A549 (cell line): ENCODE measurements at regions of chr9 and their contacts with region 1.

Region 1: GRCh38 chr9:32589083-32589723 is 16.2 kb upstream of the NDUFB6 start:
- DNase-seq: peak; percentile 53 to 63
- ATAC-seq: peak; percentile 89 to 93; a peak in 5 of 6 replicates
- H3K4me3 ChIP-seq: no peak overlapping the region
- H3K27ac ChIP-seq: no peak overlapping the region
- H3K4me1 ChIP-seq: no peaks in the 10 kb centered on the region
- CTCF ChIP-seq: peak; percentile 77
- EP300 ChIP-seq: no peak
- POLR2A ChIP-seq: no peak
- RAD21 ChIP-seq: peak; percentile 77

Region 2: DNA sequence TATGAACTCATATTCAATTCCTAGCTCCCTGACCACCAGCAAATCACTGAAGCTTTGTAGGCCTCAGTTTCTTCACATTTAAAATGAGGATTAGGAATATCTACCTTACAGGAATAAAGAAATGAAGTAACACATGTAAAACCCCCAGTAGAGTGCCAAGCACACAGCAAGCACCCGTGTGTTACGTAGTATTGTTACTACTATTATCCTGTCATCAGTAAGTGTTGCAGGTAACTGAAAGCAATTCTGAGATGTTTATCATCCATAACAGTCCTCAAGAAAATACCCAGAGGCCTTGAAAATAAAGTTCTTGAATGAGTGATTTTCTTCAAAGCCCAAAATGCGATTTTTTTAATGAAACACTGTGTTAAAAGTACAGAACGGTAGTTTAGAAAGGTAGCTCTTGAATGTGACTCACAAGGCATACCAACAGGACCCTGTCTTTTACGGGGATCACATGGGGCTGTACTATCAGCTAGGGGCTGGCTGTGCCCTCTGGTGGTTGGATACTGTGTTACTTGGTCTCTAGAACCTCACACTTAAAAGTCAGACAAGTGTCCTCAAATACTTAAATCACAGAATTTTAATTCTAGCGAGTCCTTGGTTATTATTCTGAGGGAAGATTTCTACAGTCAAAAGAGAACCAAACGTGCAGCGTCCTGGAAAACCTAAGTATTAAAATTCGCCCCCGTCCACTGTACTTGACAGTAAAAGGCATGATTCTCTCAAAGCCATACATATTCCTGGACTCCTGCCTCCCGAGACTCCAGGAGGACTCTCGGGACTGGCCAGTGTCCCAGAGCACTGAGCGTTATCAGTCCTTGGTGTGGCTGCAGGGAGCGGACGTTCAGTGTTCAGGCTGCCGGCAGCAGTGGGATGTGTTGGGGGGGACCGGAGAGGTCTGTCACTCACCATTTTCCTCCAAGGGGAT is 17.0 kb before region 1 on chr9:
- CTCF ChIA-PET with region 1: interaction called, 11 read pairs
- POLR2A ChIA-PET with region 1: no interaction called
- DNase-seq: peak; percentile 79 to 89
- ATAC-seq: peak; percentile 95 to 96
- H3K4me3 ChIP-seq: peak overlapping the region; percentile 90
- H3K27ac ChIP-seq: peak overlapping the region; percentile 79 to 92
- H3K4me1 ChIP-seq: peaks cover 17% of the 10 kb centered on the region
- CTCF ChIP-seq: peak; percentile 67
- EP300 ChIP-seq: no peak
- POLR2A ChIP-seq: no peak
- RAD21 ChIP-seq: peak; percentile 55 to 64

Region 3: GRCh38 chr9:32603914-32604741 is 14.9 kb after region 1 on chr9:
- CTCF ChIA-PET with region 1: interaction called, 52 read pairs
- POLR2A ChIA-PET with region 1: no interaction called
- DNase-seq: peak; percentile 41 to 42
- ATAC-seq: peak; percentile 80 to 81; a peak in 4 of 6 replicates
- H3K4me3 ChIP-seq: no peak overlapping the region
- H3K27ac ChIP-seq: peak overlapping the region in 1 of 2 experiments; percentile 21; a peak in 1 of 6 replicates
- H3K4me1 ChIP-seq: no peaks in the 10 kb centered on the region
- CTCF ChIP-seq: no peak
- EP300 ChIP-seq: no peak
- POLR2A ChIP-seq: no peak
- RAD21 ChIP-seq: no peak

Region 4: DNA sequence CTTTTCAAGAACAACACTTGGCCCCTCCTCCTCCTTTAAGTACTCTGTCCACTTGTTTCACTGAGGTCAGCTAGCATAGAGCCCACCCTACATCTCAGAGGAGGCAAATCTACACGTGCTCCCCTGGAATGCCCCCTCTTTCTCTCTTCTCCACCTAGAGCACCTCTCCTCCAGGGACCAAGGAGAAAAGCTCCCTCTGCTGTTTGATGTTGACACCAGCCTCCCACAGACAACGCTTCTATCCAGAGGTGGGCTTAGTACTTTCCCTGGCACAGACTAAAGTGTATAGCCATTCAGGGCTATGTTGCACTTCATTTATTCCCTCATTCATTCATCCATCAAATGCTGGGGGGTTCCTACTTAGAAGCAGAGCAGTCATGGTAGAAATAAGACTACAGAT is 114.4 kb after region 1 on chr9:
- CTCF ChIA-PET with region 1: interaction called, 30 read pairs
- POLR2A ChIA-PET with region 1: no interaction called
- DNase-seq: peak in 1 of 2 experiments; percentile 12
- ATAC-seq: peak in 1 of 2 experiments; percentile 78; a peak in 3 of 6 replicates
- H3K4me3 ChIP-seq: no peak overlapping the region
- H3K27ac ChIP-seq: 0 out of 6 replicates have a peak overlapping the region, but pooled peaks of 1 of the 2 experiments have one; percentile 14
- H3K4me1 ChIP-seq: 0 out of 3 replicates have a peak, but pooled peaks cover 3% of the 10 kb centered on the region
- CTCF ChIP-seq: 0 out of 3 replicates have a peak, but pooled peaks have one; percentile 32
- EP300 ChIP-seq: no peak
- POLR2A ChIP-seq: no peak
- RAD21 ChIP-seq: peak; percentile 35 to 39; a peak in 4 of 5 replicates

Region 5: GRCh38 chr9:32783169-32783891 is 194.1 kb after region 1 on chr9 and contains the start of gene TMEM215:
- CTCF ChIA-PET with region 1: interaction called, 19 read pairs
- POLR2A ChIA-PET with region 1: no interaction called
- DNase-seq: peak in 1 of 2 experiments; percentile 20
- ATAC-seq: peak; percentile 44 to 72; a peak in 3 of 6 replicates
- H3K4me3 ChIP-seq: peak within 1 kb of the TSS; percentile 32; the same call in 2 of the 3 replicates
- H3K27ac ChIP-seq: 0 out of 6 replicates have a peak within 1 kb of the TSS, but pooled peaks of 1 of the 2 experiments have one; percentile 29
- H3K4me1 ChIP-seq: peaks cover 6% of the 10 kb centered on the region; the same call in 1 of the 3 replicates
- CTCF ChIP-seq: no peak
- EP300 ChIP-seq: no peak
- POLR2A ChIP-seq: no peak
- RAD21 ChIP-seq: no peak
- polyA plus RNA-seq, gene TMEM215: 0.03 TPM in 1 of 2 replicates, not detected in the other

Region 6: DNA sequence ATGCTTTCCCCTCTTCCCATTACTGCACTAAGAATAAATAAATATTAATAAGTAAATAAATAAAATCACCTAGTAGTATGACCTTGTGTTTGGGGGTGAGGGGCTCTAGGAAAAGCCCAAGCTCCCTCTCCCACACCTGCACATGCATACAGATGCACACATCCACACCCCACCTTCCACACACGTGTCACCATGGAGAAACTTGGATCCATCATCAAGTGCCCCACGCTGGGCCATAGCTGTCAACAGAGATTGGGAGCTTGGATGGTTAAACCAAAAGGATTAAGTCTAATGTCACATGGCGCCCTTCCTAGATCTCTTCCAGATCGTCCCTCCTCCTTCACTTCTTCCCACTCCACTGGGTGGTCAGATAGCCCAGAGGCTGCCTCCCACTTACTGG is 231.1 kb after region 1 on chr9:
- CTCF ChIA-PET with region 1: interaction called, 10 read pairs
- POLR2A ChIA-PET with region 1: no interaction called
- DNase-seq: no peak
- ATAC-seq: no peak
- H3K4me3 ChIP-seq: no peak overlapping the region
- H3K27ac ChIP-seq: no peak overlapping the region
- H3K4me1 ChIP-seq: no peaks in the 10 kb centered on the region
- CTCF ChIP-seq: no peak
- EP300 ChIP-seq: no peak
- POLR2A ChIP-seq: no peak
- RAD21 ChIP-seq: no peak

Region 7: GRCh38 chr9:32839013-32839885 is 250.0 kb after region 1 on chr9:
- CTCF ChIA-PET with region 1: no interaction called
- POLR2A ChIA-PET with region 1: no interaction called
- DNase-seq: peak in 1 of 2 experiments; percentile 12
- ATAC-seq: no peak; a peak in 1 of 6 replicates
- H3K4me3 ChIP-seq: no peak overlapping the region
- H3K27ac ChIP-seq: no peak overlapping the region
- H3K4me1 ChIP-seq: no peaks in the 10 kb centered on the region
- CTCF ChIP-seq: no peak
- EP300 ChIP-seq: no peak
- POLR2A ChIP-seq: no peak
- RAD21 ChIP-seq: no peak

Region 8: GRCh38 chr9:32954642-32955041 is 365.4 kb after region 1 on chr9:
- CTCF ChIA-PET with region 1: interaction called, 12 read pairs
- POLR2A ChIA-PET with region 1: no interaction called
- DNase-seq: peak in 1 of 2 experiments; percentile 4
- ATAC-seq: no peak
- H3K4me3 ChIP-seq: no peak overlapping the region
- H3K27ac ChIP-seq: no peak overlapping the region
- H3K4me1 ChIP-seq: no peaks in the 10 kb centered on the region
- CTCF ChIP-seq: no peak
- EP300 ChIP-seq: no peak
- POLR2A ChIP-seq: no peak
- RAD21 ChIP-seq: no peak